ENCODE measurements at regions of chr5 and their contacts with region 1.

Region 1: GRCh38 chr5:147857302-147858129 is 21.0 kb upstream of the SCGB3A2 start:
- DNase-seq: no peak
- ATAC-seq: no peak
- H3K4me3 Mint-ChIP-seq: no peak overlapping the region
- H3K27ac Mint-ChIP-seq: no peak overlapping the region
- H3K4me1 Mint-ChIP-seq: no peaks in the 10 kb centered on the region
- H3K27me3 Mint-ChIP-seq: no peaks in the 10 kb centered on the region
- CTCF ChIP-seq: peak; percentile 61

Region 2: DNA sequence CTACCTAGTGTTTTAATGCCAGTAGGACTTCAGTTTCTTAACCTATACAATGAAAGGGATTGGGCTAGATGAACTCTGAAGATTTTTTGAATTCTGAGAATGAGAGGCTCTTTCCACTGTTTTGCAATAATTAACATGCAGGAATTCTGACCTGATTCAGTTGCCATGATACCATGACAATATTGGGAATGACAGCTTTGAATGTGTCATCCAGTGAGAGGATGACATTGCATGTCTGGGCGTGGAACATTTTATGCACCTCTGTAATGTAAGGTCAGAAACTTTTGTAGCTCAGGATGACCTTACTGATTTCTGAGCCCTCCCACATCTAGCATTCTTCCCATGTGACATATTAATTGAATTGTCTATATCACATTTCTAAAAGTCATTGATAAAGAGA is 175.6 kb after region 1 on chr5:
- CTCF ChIA-PET with region 1: no interaction called
- POLR2A ChIA-PET with region 1: no interaction called
- intact Hi-C with region 1: no loop called
- DNase-seq: no peak
- ATAC-seq: no peak
- H3K4me3 Mint-ChIP-seq: no peak overlapping the region
- H3K27ac Mint-ChIP-seq: no peak overlapping the region
- H3K4me1 Mint-ChIP-seq: no peaks in the 10 kb centered on the region
- H3K27me3 Mint-ChIP-seq: no peaks in the 10 kb centered on the region
- CTCF ChIP-seq: no peak

Region 3: DNA sequence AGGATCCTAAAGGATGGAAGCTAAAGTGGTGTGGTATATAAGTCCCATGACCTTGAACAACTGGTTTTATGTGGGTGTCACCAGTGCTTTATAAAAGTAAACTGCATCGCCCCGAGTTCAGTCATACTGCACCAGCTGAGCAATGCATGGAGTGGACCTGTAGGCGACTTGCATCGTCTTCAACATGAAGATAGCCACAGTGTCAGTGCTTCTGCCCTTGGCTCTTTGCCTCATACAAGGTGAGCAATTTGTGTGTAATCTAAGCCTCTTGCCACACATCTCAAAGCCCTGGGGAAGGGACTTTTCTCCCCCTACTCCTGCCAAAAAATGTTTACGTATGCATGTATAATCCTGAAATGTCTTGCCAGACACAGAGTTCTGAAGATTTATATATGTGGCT is 206.3 kb after region 1 on chr5 and contains the start of gene SPINK5:
- CTCF ChIA-PET with region 1: no interaction called
- POLR2A ChIA-PET with region 1: no interaction called
- intact Hi-C with region 1: no loop called
- DNase-seq: no peak
- ATAC-seq: no peak
- H3K4me3 Mint-ChIP-seq: no peak within 1 kb of the TSS
- H3K27ac Mint-ChIP-seq: no peak within 1 kb of the TSS
- H3K4me1 Mint-ChIP-seq: no peaks in the 10 kb centered on the region
- H3K27me3 Mint-ChIP-seq: no peaks in the 10 kb centered on the region
- CTCF ChIP-seq: no peak
- total RNA-seq, gene SPINK5: not detected in 2 replicates

Region 4: GRCh38 chr5:148457183-148457620 is 599.7 kb after region 1 on chr5:
- CTCF ChIA-PET with region 1: no interaction called
- POLR2A ChIA-PET with region 1: no interaction called
- intact Hi-C with region 1: loop called (anchors 10 kb)
- DNase-seq: no peak
- ATAC-seq: peak; percentile 64
- H3K4me3 Mint-ChIP-seq: no peak overlapping the region
- H3K27ac Mint-ChIP-seq: no peak overlapping the region
- H3K4me1 Mint-ChIP-seq: peaks cover 2% of the 10 kb centered on the region
- H3K27me3 Mint-ChIP-seq: peaks cover 22% of the 10 kb centered on the region
- CTCF ChIP-seq: no peak

Region 5: DNA sequence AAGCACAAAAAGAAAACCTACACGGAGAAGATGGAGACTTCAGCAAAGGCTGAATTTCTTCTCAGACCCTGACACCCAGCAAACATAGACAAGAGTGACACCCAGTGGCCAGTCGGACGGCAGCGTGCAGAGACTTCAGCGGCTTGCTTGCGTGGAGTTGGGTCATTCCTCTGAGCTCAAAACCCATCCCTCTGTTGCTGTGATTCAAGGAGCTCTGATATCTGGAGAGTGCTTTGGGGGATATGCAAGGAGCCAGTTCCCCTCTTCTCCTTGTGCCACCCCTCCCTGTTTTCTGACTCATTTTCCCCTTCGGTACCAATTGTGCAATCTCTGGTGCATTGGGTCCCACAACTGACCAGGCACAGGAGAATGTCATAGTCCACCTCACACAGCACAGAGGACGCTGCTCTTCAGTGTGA is 1177.9 kb after region 1 on chr5:
- CTCF ChIA-PET with region 1: no interaction called
- POLR2A ChIA-PET with region 1: no interaction called
- intact Hi-C with region 1: loop called (anchors 10 kb)
- DNase-seq: peak; percentile 30
- ATAC-seq: peak; percentile 79
- H3K4me3 Mint-ChIP-seq: no peak overlapping the region
- H3K27ac Mint-ChIP-seq: no peak overlapping the region
- H3K4me1 Mint-ChIP-seq: no peaks in the 10 kb centered on the region
- H3K27me3 Mint-ChIP-seq: peaks cover 16% of the 10 kb centered on the region
- CTCF ChIP-seq: no peak

Region 6: DNA sequence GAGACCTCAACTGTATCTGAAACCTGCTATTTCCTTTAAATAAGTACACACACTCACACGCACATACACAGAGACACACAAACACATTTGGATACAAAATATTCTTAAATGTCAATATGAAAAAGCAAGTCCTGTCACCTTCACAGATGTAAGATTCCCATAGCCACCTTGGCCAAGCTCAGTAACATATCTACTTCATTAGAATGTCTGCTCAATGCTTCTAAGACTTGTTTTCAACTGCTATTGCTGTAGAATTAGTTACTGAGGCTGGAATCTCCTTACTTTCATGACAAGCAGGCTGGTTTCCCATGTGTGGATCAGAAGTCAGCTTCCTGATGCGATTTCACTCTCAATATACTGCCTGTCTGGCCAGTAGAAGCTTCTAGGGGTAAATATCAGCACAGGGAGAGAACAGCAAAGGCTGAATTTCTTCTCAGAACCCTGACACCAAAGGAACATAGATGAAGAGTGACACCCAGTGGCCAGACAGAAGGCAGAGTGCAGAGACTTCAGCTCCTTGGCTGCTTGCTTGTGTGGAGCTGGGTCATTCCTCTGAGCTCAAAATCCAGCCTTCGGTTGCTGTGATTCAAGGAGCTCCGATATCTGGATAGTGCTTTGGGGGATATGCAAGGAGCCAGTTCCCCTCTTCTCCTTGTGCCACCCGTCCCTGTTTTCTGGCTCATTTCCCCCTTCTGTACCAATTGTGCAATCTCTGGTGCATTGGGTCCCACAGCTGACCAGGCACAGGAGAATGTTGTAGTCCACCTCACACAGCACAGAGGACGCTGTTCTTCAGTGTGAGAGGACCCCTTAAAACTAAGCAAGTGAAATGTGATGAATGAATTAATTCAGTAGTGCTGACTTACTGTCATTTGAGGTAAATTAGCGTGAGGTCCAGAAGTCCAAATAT is 1257.1 kb after region 1 on chr5:
- CTCF ChIA-PET with region 1: no interaction called
- POLR2A ChIA-PET with region 1: no interaction called
- intact Hi-C with region 1: loop called (anchors 10 kb)
- DNase-seq: no peak
- ATAC-seq: peak; percentile 45
- H3K4me3 Mint-ChIP-seq: no peak overlapping the region
- H3K27ac Mint-ChIP-seq: no peak overlapping the region
- H3K4me1 Mint-ChIP-seq: no peaks in the 10 kb centered on the region
- H3K27me3 Mint-ChIP-seq: peaks cover 23% of the 10 kb centered on the region
- CTCF ChIP-seq: no peak